Heart left ventricle (tissue), 16 donors: ENCODE measurements at regions of chr3 and their contacts with region 1.

Region 1: DNA sequence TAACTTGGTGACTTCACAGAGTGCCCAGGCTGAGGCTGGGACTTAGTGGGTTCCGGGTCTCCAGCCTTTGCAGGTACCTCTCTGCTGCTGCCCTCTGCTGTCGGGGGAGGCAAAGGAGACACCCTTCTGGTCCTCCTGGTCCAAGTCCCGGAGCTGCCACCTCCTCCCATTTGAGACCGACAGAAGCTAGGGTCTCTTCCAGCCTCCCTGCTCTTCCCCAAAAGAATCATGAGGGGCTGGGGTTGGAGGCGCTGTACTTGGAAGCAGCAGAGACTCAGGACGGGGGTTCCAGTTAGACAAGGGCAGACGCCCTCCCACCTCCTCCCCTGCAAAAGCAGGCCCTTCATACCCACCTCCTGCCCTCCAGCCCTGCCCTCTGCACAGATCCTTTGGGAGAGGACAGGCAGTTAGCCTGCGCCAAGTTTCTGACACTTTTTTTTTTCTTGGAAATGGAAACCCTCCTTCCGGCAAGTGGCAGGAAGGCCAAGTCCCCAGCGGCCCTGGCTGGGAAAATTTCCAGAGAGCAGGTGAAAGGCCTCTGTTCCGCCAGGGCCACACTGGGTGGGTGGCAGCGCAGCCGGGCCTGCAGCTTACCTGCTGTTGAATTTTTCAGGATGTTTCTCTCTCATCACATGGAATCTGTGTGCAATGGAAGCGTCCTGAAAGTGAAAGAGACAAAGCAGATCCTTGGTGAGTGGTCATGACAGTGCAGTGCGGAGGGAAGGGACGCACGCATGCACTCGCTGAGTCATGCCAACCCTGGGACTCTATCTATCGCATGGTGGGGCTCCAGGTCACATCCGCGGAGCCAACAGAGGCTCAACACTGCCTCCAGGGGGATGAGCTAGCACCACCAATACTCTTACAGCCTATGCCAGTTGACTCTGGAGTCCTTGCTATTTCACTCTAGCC is 119.9 kb downstream of the DGKG start:
- DNase-seq: peak; percentile 73 to 86 (median 80)
- ATAC-seq: peak; percentile 92 to 97 (median 96)
- H3K4me3 ChIP-seq: peak overlapping the region in 11 of 12 donors; percentile 9 to 56 (median 33)
- H3K27ac ChIP-seq: peak overlapping the region; percentile 11 to 82 (median 69)
- H3K4me1 ChIP-seq: peaks cover 0 to 44% (median 23%) of the 10 kb centered on the region in 12 donors
- H3K27me3 ChIP-seq: no peaks in the 10 kb centered on the region
- CTCF ChIP-seq: peak; percentile 32 to 66 (median 45)
- POLR2A ChIP-seq: no peak

Region 2: GRCh38 chr3:186097663-186098451 is 144.3 kb before region 1 on chr3:
- intact Hi-C with region 1: loop called in 2 of 10 experiments (anchors 5 to 10 kb)
- DNase-seq: peak; percentile 67 to 75 (median 69)
- ATAC-seq: peak; percentile 84 to 94 (median 92)
- H3K4me3 ChIP-seq: peak overlapping the region in 11 of 12 donors; percentile 0 to 62 (median 49)
- H3K27ac ChIP-seq: peak overlapping the region in 5 of 12 donors; percentile 20 to 64 (median 43)
- H3K4me1 ChIP-seq: peaks cover 0 to 56% (median 25%) of the 10 kb centered on the region in 12 donors
- H3K27me3 ChIP-seq: no peaks in the 10 kb centered on the region
- CTCF ChIP-seq: no peak
- POLR2A ChIP-seq: no peak

Region 3: DNA sequence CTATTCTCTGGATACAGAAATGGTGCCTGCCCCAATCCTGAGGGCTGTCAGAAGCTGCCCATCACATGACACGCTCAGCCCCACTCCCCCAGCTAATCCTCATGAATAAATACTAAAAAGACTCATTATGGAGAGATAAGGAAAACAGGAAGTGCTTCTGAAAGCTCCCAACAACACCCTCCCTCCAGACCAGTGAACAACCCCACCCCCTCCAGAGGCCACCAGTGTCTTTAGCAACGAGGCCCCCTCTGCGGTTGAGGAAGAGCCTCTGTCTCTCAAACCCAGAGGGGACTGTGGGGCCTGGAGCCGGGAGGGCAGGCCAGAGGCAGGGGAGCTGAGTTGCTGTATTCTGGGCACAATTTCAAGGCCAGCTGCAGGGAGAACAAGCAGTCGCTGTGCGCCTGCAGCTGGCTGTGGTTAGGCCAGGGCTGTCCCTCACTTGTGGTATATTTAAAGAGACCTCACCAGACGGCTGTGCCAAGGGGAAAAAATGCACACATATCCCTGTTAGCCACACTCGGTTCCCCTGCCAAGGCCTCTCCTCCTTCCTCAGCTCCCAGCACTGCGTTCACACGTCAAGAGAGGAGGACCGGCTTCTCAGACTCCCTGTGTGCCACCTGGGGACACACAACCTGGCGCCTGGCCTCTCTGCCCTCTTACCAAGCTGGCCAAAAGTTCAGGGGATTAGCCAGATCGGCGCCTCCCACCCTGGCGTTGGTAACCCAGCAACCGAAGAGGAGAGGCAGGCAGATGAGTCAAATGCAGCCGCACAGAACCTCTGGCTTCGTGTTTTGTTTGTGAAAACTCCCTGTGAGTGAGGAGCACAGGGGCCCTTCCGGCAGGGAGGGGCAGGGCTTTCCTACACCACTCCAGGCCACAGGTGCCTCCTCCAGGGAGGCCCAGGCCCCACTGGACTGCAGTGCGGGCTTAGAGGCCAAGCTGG is 32.1 kb before region 1 on chr3:
- intact Hi-C with region 1: no loop called
- DNase-seq: peak; percentile 66 to 86 (median 74)
- ATAC-seq: peak; percentile 87 to 92 (median 90)
- H3K4me3 ChIP-seq: peak overlapping the region in 2 of 12 donors; percentile 13 to 14
- H3K27ac ChIP-seq: peak overlapping the region; percentile 17 to 81 (median 74)
- H3K4me1 ChIP-seq: peaks cover 0 to 56% (median 26%) of the 10 kb centered on the region in 12 donors
- H3K27me3 ChIP-seq: no peaks in the 10 kb centered on the region
- CTCF ChIP-seq: no peak
- POLR2A ChIP-seq: no peak